Naive thymus-derived CD8-positive, alpha-beta T cell (primary cell): ENCODE measurements at regions of chr7 and their contacts with region 1.

Region 1: GRCh38 chr7:5831196-5831595 is 49.4 kb upstream of the OCM start:
- DNase-seq: peak in 1 of 10 donors; percentile 52
- ATAC-seq: no peak
- H3K4me3 Mint-ChIP-seq: no peak overlapping the region
- H3K27ac Mint-ChIP-seq: peak overlapping the region in 9 of 10 donors; percentile 15 to 77 (median 48)
- H3K4me1 Mint-ChIP-seq: peaks cover 17 to 46% (median 38%) of the 10 kb centered on the region in 4 donors
- H3K27me3 Mint-ChIP-seq: no peaks in the 10 kb centered on the region

Region 2: DNA sequence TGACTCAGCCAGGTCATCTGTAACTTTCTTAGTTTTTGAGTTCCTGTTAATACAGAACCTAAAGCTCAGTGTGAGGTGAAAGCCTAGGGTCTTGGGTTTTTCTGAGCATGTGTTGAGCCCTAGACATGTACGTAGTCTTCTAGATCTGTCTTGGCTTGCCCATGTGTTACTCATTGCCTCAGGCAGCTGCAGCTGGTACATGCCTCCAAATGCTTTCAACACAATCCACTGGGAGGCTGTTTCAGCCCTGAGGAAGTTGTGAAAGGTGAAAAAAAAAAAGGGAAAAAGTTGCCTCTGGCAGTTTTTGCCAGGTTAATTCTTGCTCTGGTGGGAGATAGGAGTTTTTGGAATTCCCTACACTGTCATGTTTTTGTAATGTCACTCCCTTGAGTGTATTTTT is 184.3 kb before region 1 on chr7:
- POLR2A ChIA-PET with region 1: no interaction called
- DNase-seq: no peak
- ATAC-seq: no peak
- H3K4me3 Mint-ChIP-seq: no peak overlapping the region
- H3K27ac Mint-ChIP-seq: peak overlapping the region in 1 of 10 donors; percentile 27
- H3K4me1 Mint-ChIP-seq: peaks cover 16 to 30% (median 30%) of the 10 kb centered on the region in 4 donors
- H3K27me3 Mint-ChIP-seq: no peaks in the 10 kb centered on the region

Region 3: DNA sequence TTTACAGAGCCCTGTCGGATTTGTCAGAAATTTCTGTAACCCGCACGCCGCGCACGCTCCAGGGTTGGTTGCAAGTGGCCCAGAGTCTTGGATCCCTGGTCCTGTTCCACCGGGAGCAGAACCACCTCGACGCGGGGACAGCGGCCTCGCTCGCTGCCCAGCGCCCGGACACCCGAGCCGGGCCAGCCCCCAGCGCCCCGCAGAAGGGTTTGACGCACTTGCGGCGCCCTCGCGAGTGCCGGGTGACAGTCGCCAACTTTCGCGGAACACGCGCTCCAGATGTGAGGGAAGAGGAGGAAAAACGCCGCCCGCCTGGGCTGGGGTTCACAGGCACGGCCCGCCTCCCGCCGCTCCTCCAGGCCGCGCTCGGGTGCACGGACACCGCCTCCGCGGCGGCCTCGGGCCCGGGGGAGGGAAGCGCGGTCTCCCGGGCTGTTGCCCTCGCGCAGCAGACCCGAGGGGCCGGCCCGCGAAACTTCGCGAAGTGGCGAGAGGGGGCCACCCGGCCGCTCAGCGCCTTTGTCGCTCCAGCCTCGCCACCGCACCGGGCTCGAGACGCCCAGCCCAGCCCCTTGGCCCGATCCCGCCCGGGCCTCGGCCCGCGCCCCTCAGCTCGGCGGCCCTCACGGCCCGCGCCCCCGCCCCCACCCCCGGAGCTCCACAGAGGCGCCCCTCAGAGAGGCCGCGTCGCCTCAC is 50.2 kb before region 1 on chr7:
- POLR2A ChIA-PET with region 1: interaction called, 19 read pairs
- DNase-seq: peak in 6 of 10 donors; percentile 7 to 34 (median 16)
- ATAC-seq: peak; percentile 19 to 38
- H3K4me3 Mint-ChIP-seq: peak overlapping the region; percentile 81 to 94 (median 88)
- H3K27ac Mint-ChIP-seq: peak overlapping the region; percentile 72 to 95 (median 91)
- H3K4me1 Mint-ChIP-seq: peaks cover 25 to 48% (median 43%) of the 10 kb centered on the region in 4 donors
- H3K27me3 Mint-ChIP-seq: no peaks in the 10 kb centered on the region

Region 4: GRCh38 chr7:5854738-5855137 is 23.5 kb after region 1 on chr7:
- POLR2A ChIA-PET with region 1: interaction called, 19 read pairs
- DNase-seq: no peak
- ATAC-seq: no peak
- H3K4me3 Mint-ChIP-seq: no peak overlapping the region
- H3K27ac Mint-ChIP-seq: peak overlapping the region in 5 of 10 donors; percentile 16 to 67 (median 53)
- H3K4me1 Mint-ChIP-seq: peaks cover 2 to 26% (median 17%) of the 10 kb centered on the region in 4 donors
- H3K27me3 Mint-ChIP-seq: no peaks in the 10 kb centered on the region